ENCODE measurements at regions of chr5 and their contacts with region 1.

Region 1: GRCh38 chr5:89484962-89485361 is 602.0 kb upstream of the MEF2C start:
- DNase-seq: no peak
- H3K4me3 ChIP-seq: no peak overlapping the region
- H3K27ac ChIP-seq: no peak overlapping the region
- H3K4me1 ChIP-seq: no peaks in the 10 kb centered on the region
- H3K27me3 ChIP-seq: no peaks in the 10 kb centered on the region
- CTCF ChIP-seq: no peak

Region 2: DNA sequence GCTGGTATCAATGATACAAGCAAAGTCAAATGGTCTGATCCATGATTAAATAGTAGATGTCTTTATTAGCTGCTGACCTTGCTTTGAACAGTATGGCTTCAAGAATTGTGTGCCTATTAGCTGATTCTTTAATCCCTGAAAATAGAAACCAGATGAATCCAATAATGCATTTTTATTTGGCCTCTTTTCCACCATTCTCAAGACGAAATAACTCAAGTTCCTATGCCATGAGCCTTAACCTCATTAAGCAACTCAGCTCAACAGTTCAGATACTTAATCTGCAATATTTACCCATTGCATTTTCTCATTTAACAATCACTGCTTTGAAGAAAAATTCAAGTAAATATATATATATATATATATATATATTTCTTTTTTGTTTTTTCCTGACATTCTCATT is 13.4 kb before region 1 on chr5:
- CTCF ChIA-PET with region 1: no interaction called
- POLR2A ChIA-PET with region 1: interaction called, 13 read pairs
- intact Hi-C with region 1: no loop called
- DNase-seq: no peak
- H3K4me3 ChIP-seq: no peak overlapping the region
- H3K27ac ChIP-seq: no peak overlapping the region
- H3K4me1 ChIP-seq: no peaks in the 10 kb centered on the region
- H3K27me3 ChIP-seq: no peaks in the 10 kb centered on the region
- CTCF ChIP-seq: no peak

Measured in PC-9 (cell line).